PC-9 (cell line): ENCODE measurements at regions of chr3 and their contacts with region 1.

Region 1: GRCh38 chr3:50550079-50550741 is 17.3 kb downstream of the C3orf18 start:
- DNase-seq: peak in 1 of 2 experiments; percentile 63
- H3K4me3 ChIP-seq: no peak overlapping the region
- H3K27ac ChIP-seq: no peak overlapping the region
- H3K4me1 ChIP-seq: no peaks in the 10 kb centered on the region
- H3K27me3 ChIP-seq: no peaks in the 10 kb centered on the region
- CTCF ChIP-seq: peak; percentile 72

Region 2: GRCh38 chr3:50121416-50122032 is 428.7 kb before region 1 on chr3:
- CTCF ChIA-PET with region 1: no interaction called
- POLR2A ChIA-PET with region 1: no interaction called
- intact Hi-C with region 1: loop called (anchors 10 kb)
- DNase-seq: peak; percentile 63 to 76
- H3K4me3 ChIP-seq: no peak overlapping the region
- H3K27ac ChIP-seq: no peak overlapping the region
- H3K4me1 ChIP-seq: 0 out of 2 replicates have a peak, but pooled peaks cover 4% of the 10 kb centered on the region
- H3K27me3 ChIP-seq: no peaks in the 10 kb centered on the region
- CTCF ChIP-seq: peak; percentile 87